MCF 10A (cell line): ENCODE measurements at regions of chr17 and their contacts with region 1.

Region 1: GRCh38 chr17:58352014-58352842 is at the start of gene SUPT4H1:
- DNase-seq: peak; percentile 94
- H3K4me3 Mint-ChIP-seq: peak within 1 kb of the TSS; percentile 98
- H3K27ac Mint-ChIP-seq: peak within 1 kb of the TSS; percentile 97
- H3K4me1 Mint-ChIP-seq: peaks cover 10% of the 10 kb centered on the region
- H3K27me3 Mint-ChIP-seq: no peaks in the 10 kb centered on the region
- CTCF ChIP-seq: no peak
- total RNA-seq, gene SUPT4H1: 63.4 and 90.8 TPM in 2 replicates

Region 2: GRCh38 chr17:58219001-58219788 is 133.0 kb before region 1 on chr17 and contains the start of gene MKS1:
- CTCF ChIA-PET with region 1: no interaction called
- POLR2A ChIA-PET with region 1: interaction called, 11 read pairs
- intact Hi-C with region 1: no loop called
- DNase-seq: peak; percentile 86
- H3K4me3 Mint-ChIP-seq: peak within 1 kb of the TSS; percentile 88
- H3K27ac Mint-ChIP-seq: peak within 1 kb of the TSS; percentile 95
- H3K4me1 Mint-ChIP-seq: peaks cover 11% of the 10 kb centered on the region
- H3K27me3 Mint-ChIP-seq: no peaks in the 10 kb centered on the region
- CTCF ChIP-seq: peak; percentile 34
- total RNA-seq, gene MKS1: 15.4 and 22.8 TPM in 2 replicates

Region 3: GRCh38 chr17:58337600-58338453 is 14.4 kb before region 1 on chr17:
- CTCF ChIA-PET with region 1: no interaction called
- POLR2A ChIA-PET with region 1: interaction called, 17 read pairs
- intact Hi-C with region 1: no loop called
- DNase-seq: peak; percentile 62
- H3K4me3 Mint-ChIP-seq: no peak overlapping the region
- H3K27ac Mint-ChIP-seq: no peak overlapping the region
- H3K4me1 Mint-ChIP-seq: no peaks in the 10 kb centered on the region
- H3K27me3 Mint-ChIP-seq: no peaks in the 10 kb centered on the region
- CTCF ChIP-seq: no peak

Region 4: GRCh38 chr17:58391302-58391984 is 39.2 kb after region 1 on chr17:
- CTCF ChIA-PET with region 1: interaction called, 9 read pairs
- POLR2A ChIA-PET with region 1: interaction called, 36 read pairs
- intact Hi-C with region 1: no loop called
- DNase-seq: peak; percentile 97
- H3K4me3 Mint-ChIP-seq: peak overlapping the region; percentile 2
- H3K27ac Mint-ChIP-seq: peak overlapping the region; percentile 59
- H3K4me1 Mint-ChIP-seq: peaks cover 40% of the 10 kb centered on the region
- H3K27me3 Mint-ChIP-seq: no peaks in the 10 kb centered on the region
- CTCF ChIP-seq: no peak

Region 5: GRCh38 chr17:58411438-58411797 is 59.2 kb after region 1 on chr17:
- CTCF ChIA-PET with region 1: interaction called, 54 read pairs
- POLR2A ChIA-PET with region 1: interaction called, 436 read pairs
- intact Hi-C with region 1: no loop called
- DNase-seq: peak; percentile 21
- H3K4me3 Mint-ChIP-seq: no peak overlapping the region
- H3K27ac Mint-ChIP-seq: no peak overlapping the region
- H3K4me1 Mint-ChIP-seq: peaks cover 41% of the 10 kb centered on the region
- H3K27me3 Mint-ChIP-seq: no peaks in the 10 kb centered on the region
- CTCF ChIP-seq: no peak